CD8-positive, alpha-beta memory T cell (primary cell): ENCODE measurements at regions of chr1 and their contacts with region 1.

Region 1: GRCh38 chr1:247487057-247487456 is 29.2 kb upstream of the OR2B11 start:
- DNase-seq: peak in 4 of 5 donors; percentile 8 to 50 (median 39)
- H3K4me3 ChIP-seq: no peak overlapping the region
- H3K4me3 Mint-ChIP-seq: no peak overlapping the region
- H3K27ac ChIP-seq: no peak overlapping the region
- H3K27ac Mint-ChIP-seq: peak overlapping the region in 1 of 8 donors; percentile 3
- H3K4me1 ChIP-seq: no peaks in the 10 kb centered on the region
- H3K4me1 Mint-ChIP-seq: no peaks in the 10 kb centered on the region
- H3K27me3 ChIP-seq: no peaks in the 10 kb centered on the region
- H3K27me3 Mint-ChIP-seq: peaks cover 6 to 10% of the 10 kb centered on the region in 2 donors

Region 2: GRCh38 chr1:247373721-247374141 is 113.3 kb before region 1 on chr1:
- CTCF ChIA-PET with region 1: interaction called, 101 read pairs
- POLR2A ChIA-PET with region 1: no interaction called
- DNase-seq: peak; percentile 28 to 69 (median 38)
- H3K4me3 ChIP-seq: no peak overlapping the region
- H3K4me3 Mint-ChIP-seq: peak overlapping the region; percentile 32 to 77 (median 52)
- H3K27ac ChIP-seq: no peak overlapping the region
- H3K27ac Mint-ChIP-seq: no peak overlapping the region
- H3K4me1 ChIP-seq: no peaks in the 10 kb centered on the region
- H3K4me1 Mint-ChIP-seq: peaks cover 6 to 9% (median 8%) of the 10 kb centered on the region in 3 donors
- H3K27me3 ChIP-seq: no peaks in the 10 kb centered on the region
- H3K27me3 Mint-ChIP-seq: peaks cover 12 to 27% of the 10 kb centered on the region in 2 donors

Region 3: GRCh38 chr1:247408100-247408499 is 79.0 kb before region 1 on chr1:
- CTCF ChIA-PET with region 1: no interaction called
- POLR2A ChIA-PET with region 1: no interaction called
- DNase-seq: no peak
- H3K4me3 ChIP-seq: no peak overlapping the region
- H3K4me3 Mint-ChIP-seq: peak overlapping the region; percentile 40 to 92 (median 83)
- H3K27ac ChIP-seq: peak overlapping the region; percentile 17
- H3K27ac Mint-ChIP-seq: peak overlapping the region; percentile 70 to 95 (median 90)
- H3K4me1 ChIP-seq: peaks cover 35% of the 10 kb centered on the region
- H3K4me1 Mint-ChIP-seq: peaks cover 33 to 46% (median 45%) of the 10 kb centered on the region in 3 donors
- H3K27me3 ChIP-seq: no peaks in the 10 kb centered on the region
- H3K27me3 Mint-ChIP-seq: peaks cover 0 to 1% of the 10 kb centered on the region in 2 donors